ENCODE measurements at regions of chr1 and their contacts with region 1.

Region 1: GRCh38 chr1:42747125-42747524 is 7.1 kb upstream of the CLDN19 start:
- DNase-seq: no peak
- H3K4me3 ChIP-seq: no peak overlapping the region
- H3K27ac ChIP-seq: no peak overlapping the region
- H3K4me1 ChIP-seq: no peaks in the 10 kb centered on the region
- H3K27me3 ChIP-seq: no peaks in the 10 kb centered on the region
- CTCF ChIP-seq: peak; percentile 29 to 49

Region 2: GRCh38 chr1:42586016-42586415 is 161.1 kb before region 1 on chr1:
- intact Hi-C with region 1: loop called (anchors 10 kb)
- DNase-seq: no peak
- H3K4me3 ChIP-seq: no peak overlapping the region
- H3K27ac ChIP-seq: no peak overlapping the region
- H3K4me1 ChIP-seq: no peaks in the 10 kb centered on the region
- H3K27me3 ChIP-seq: no peaks in the 10 kb centered on the region
- CTCF ChIP-seq: no peak

Measured in tibial artery (tissue), 4 donors.